Motor neuron (in vitro differentiated cells): ENCODE measurements at regions of chr14 and their contacts with region 1.

Region 1: DNA sequence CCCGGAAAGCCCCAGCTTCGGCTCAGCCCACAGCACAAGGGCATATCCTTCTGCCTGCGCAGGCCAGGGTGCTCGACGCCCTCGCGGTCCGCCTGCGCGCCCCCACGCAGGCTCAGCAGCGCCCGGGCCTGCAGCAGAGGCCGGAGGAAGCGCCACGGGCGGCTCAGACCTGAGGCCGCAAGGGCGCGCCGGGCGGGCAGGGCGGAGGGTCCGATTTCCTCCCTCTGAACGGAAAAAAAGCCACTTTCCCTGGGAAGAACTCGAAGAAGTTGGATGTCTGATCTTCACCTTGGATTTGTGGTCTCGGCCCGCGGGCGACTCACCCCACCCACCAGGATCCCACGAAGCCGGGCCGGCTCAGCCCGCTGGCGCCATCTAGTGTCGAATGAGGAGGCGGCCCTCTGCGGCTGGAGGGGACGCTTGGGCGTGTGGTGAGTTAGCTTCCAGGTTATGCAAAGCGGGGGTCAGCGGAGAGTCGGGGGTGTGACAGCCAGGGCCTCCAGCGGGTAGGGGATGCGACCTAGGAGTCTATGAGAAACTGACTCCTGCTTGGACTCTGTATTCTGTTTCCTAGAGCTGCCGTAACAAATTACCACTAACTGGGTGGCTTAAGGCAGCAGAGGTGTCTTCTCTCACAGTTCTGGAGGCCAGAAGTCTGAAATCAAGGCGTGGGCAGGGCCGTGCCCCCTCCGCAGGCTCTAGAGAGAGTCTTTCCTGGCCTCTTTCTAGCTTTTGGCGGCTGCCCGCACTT is 40.0 kb upstream of the SRSF5 start:
- ATAC-seq: peak; percentile 88 to 99 (median 98)
- H3K4me3 ChIP-seq: peak overlapping the region in 1 of 5 donors; percentile 1
- H3K27ac ChIP-seq: no peak overlapping the region
- H3K4me1 ChIP-seq: peaks cover 0 to 6% of the 10 kb centered on the region in 2 donors

Region 2: GRCh38 chr14:69059658-69060623 is 667.0 kb before region 1 on chr14:
- in situ Hi-C with region 1: no loop called
- ATAC-seq: peak in 7 of 8 experiments; percentile 31 to 80 (median 62)
- H3K4me3 ChIP-seq: no peak overlapping the region
- H3K27ac ChIP-seq: no peak overlapping the region
- H3K4me1 ChIP-seq: peaks cover 14 to 15% of the 10 kb centered on the region in 2 donors

Region 3: DNA sequence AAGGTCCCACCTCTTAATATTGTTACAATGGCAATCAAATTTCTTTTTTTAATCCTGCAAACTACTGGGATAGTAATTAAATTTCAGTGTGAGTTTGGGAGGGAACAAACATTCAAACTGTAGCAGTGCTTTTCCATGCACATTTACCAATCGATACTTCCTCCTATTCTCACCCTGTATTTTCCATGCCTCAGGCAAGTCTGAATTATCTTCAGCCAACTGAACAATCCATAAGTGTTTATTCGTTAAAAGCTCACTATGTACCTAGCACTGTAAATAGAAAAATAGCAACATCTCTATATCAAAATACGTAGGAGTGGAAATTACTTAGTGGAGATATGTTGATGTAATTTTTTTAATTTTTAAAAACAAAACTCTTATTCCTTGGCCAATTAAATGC is 195.8 kb before region 1 on chr14:
- in situ Hi-C with region 1: no loop called
- ATAC-seq: peak in 1 of 8 experiments; percentile 14
- H3K4me3 ChIP-seq: no peak overlapping the region
- H3K27ac ChIP-seq: no peak overlapping the region
- H3K4me1 ChIP-seq: no peaks in the 10 kb centered on the region

Region 4: DNA sequence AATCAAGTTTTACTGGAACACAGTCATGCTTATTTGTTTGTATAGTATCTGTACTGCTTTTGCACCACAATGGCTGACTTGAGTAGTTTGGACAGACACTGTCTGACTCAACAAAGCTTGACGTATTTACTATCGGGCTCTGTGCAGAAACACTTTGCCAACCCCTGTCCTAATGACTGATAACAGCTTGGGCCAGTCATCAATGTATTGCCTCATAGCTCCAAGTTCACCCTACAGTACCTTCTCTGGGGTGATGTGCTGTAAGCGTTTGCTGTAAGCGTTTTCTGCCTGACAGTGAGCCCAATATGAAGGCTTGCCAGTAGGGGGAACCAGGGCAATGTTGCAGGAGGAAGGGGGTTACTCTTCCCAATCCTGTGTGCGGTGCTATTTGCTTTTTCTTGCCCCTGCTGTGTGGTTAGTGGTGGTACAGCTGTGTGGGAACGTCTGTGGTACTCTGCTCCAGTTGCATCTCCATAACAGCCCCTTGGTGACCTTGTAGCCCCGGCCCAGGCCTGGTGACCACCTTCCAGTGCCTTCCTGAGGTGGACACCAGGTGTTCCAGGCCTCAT is 146.8 kb before region 1 on chr14:
- in situ Hi-C with region 1: loop called (anchors 10 to 25 kb)
- ATAC-seq: peak; percentile 65 to 95 (median 90)
- H3K4me3 ChIP-seq: no peak overlapping the region
- H3K27ac ChIP-seq: no peak overlapping the region
- H3K4me1 ChIP-seq: peaks cover 4 to 5% of the 10 kb centered on the region in 2 donors

Region 5: GRCh38 chr14:69643443-69644164 is 83.3 kb before region 1 on chr14:
- in situ Hi-C with region 1: no loop called
- ATAC-seq: peak in 1 of 8 experiments; percentile 69
- H3K4me3 ChIP-seq: no peak overlapping the region
- H3K27ac ChIP-seq: no peak overlapping the region
- H3K4me1 ChIP-seq: peaks cover 3 to 4% of the 10 kb centered on the region in 2 donors